ENCODE measurements at regions of chr19 and their contacts with region 1.

Region 1: GRCh38 chr19:5904352-5905113 is at the start of gene VMAC:
- H3K4me3 ChIP-seq: peak within 1 kb of the TSS; percentile 97
- H3K27ac ChIP-seq: peak within 1 kb of the TSS; percentile 88
- H3K4me1 ChIP-seq: no peaks in the 10 kb centered on the region
- CTCF ChIP-seq: no peak

Region 2: GRCh38 chr19:5690125-5690954 is 214.2 kb before region 1 on chr19 and contains the start of gene RPL36:
- CTCF ChIA-PET with region 1: interaction called, 3 read pairs
- POLR2A ChIA-PET with region 1: interaction called, 10 read pairs
- H3K4me3 ChIP-seq: peak within 1 kb of the TSS; percentile 97
- H3K27ac ChIP-seq: peak within 1 kb of the TSS; percentile 100
- H3K4me1 ChIP-seq: no peaks in the 10 kb centered on the region; the same call in 1 of the 2 replicates
- CTCF ChIP-seq: peak; percentile 100

Region 3: DNA sequence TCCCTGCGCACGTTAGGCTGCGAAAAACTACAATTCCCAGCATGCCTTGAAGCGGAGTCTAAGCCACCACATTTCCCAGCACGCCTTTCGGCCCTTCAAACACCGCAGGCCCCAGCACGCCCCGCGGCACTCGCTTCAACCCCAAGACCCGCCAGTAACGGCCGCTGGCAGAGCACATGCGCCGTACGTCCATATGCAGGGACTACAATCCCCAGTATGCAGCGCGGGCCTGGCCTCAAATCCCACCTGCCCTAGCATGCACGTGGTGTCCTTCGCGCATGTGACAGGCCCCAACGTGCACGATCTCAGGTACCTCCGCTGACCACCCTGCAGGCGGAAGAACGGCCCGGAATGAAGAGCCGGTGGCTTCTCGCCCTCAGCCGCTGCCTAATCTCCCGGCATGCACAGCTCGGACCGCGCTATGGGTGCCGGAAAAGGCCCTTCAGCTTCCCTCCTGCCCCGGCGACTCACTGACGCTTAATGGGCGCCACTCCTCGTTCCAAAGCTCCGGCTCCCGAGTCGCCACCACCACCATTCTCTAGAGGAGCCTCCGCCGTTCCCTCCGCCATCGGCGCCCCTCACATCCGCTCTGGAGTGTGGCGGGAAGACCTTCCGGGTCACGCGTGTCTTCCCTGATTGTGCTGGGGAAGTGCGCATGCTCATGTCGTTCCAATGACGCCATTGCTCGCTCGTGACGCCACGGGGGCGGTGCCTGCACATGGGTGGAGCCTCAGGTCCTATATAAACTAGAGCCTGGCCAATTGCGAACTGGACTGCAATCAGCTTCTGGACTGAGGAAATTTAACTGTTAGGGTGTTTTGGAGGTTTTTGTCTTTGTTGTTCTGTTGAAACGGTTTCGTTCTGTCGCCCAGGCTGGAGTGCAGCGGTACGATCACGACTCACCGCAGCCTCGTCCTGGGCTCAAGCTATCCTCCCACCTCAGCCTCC is 113.7 kb before region 1 on chr19 and contains the start of gene DUS3L:
- CTCF ChIA-PET with region 1: interaction called, 4 read pairs
- POLR2A ChIA-PET with region 1: interaction called, 10 read pairs
- H3K4me3 ChIP-seq: peak within 1 kb of the TSS; percentile 71
- H3K27ac ChIP-seq: peak within 1 kb of the TSS; percentile 82
- H3K4me1 ChIP-seq: no peaks in the 10 kb centered on the region
- CTCF ChIP-seq: peak; percentile 23

Region 4: DNA sequence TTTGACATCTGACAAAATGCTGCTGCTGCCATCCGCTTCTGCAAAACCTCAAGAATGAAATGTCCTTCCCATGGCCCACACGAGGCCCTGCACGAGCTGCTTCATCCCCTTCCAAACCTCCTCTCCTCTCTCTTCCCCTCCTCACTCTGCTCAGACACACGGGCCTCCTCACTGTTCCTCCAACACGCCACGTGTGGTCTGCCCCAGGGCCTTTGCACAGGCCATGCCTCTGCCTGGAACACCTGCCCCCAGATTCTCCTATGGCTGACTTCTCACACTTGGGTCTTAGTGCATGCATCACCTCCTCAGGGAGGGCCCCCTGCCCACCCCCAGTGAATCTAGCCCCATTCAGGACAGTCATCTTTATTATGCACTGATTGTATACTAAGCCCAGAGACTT is 83.7 kb before region 1 on chr19:
- CTCF ChIA-PET with region 1: interaction called, 3 read pairs
- POLR2A ChIA-PET with region 1: interaction called, 18 read pairs
- H3K4me3 ChIP-seq: no peak overlapping the region
- H3K27ac ChIP-seq: no peak overlapping the region
- H3K4me1 ChIP-seq: no peaks in the 10 kb centered on the region
- CTCF ChIP-seq: no peak

Region 5: DNA sequence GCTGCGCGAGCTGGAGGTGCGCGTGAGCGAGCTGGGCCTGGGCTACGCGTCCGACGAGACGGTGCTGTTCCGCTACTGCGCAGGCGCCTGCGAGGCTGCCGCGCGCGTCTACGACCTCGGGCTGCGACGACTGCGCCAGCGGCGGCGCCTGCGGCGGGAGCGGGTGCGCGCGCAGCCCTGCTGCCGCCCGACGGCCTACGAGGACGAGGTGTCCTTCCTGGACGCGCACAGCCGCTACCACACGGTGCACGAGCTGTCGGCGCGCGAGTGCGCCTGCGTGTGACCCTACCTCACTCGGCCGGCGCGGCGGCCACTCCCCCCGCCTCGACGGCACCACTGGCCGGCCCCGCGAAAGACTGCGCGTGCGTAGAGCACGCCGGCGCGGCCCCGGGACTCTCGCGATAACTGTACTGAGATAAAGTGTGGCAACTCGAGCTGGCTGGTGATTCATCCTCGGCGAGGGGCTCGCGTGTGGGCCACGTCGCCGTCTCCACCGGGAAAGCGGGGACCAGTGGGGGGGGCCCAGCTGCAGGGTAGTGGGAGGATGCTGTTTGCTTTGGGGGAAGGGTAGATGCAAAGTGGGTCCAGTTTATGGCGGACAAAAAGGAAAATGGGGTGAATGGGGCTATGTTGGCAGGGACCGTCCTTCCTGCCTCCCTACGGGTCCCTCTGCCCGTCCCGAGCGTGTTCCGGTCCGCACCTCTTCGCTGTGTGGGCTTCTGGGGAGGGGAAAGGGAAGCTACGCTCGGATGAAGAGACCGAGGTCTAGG is 76.5 kb before region 1 on chr19:
- CTCF ChIA-PET with region 1: no interaction called
- POLR2A ChIA-PET with region 1: interaction called, 35 read pairs
- H3K4me3 ChIP-seq: peak overlapping the region; percentile 34
- H3K27ac ChIP-seq: peak overlapping the region; percentile 59; the same call in 1 of the 2 replicates
- H3K4me1 ChIP-seq: peaks cover 6% of the 10 kb centered on the region
- CTCF ChIP-seq: no peak

Region 6: GRCh38 chr19:5864725-5865486 is 39.6 kb before region 1 on chr19:
- CTCF ChIA-PET with region 1: no interaction called
- POLR2A ChIA-PET with region 1: no interaction called
- H3K4me3 ChIP-seq: no peak overlapping the region
- H3K27ac ChIP-seq: no peak overlapping the region
- H3K4me1 ChIP-seq: no peaks in the 10 kb centered on the region
- CTCF ChIP-seq: no peak

Region 7: GRCh38 chr19:5891938-5892771 is 12.4 kb before region 1 on chr19:
- CTCF ChIA-PET with region 1: interaction called, 11 read pairs
- POLR2A ChIA-PET with region 1: interaction called, 25 read pairs
- H3K4me3 ChIP-seq: no peak overlapping the region
- H3K27ac ChIP-seq: no peak overlapping the region
- H3K4me1 ChIP-seq: no peaks in the 10 kb centered on the region; the same call in 1 of the 2 replicates
- CTCF ChIP-seq: peak; percentile 91

Region 8: DNA sequence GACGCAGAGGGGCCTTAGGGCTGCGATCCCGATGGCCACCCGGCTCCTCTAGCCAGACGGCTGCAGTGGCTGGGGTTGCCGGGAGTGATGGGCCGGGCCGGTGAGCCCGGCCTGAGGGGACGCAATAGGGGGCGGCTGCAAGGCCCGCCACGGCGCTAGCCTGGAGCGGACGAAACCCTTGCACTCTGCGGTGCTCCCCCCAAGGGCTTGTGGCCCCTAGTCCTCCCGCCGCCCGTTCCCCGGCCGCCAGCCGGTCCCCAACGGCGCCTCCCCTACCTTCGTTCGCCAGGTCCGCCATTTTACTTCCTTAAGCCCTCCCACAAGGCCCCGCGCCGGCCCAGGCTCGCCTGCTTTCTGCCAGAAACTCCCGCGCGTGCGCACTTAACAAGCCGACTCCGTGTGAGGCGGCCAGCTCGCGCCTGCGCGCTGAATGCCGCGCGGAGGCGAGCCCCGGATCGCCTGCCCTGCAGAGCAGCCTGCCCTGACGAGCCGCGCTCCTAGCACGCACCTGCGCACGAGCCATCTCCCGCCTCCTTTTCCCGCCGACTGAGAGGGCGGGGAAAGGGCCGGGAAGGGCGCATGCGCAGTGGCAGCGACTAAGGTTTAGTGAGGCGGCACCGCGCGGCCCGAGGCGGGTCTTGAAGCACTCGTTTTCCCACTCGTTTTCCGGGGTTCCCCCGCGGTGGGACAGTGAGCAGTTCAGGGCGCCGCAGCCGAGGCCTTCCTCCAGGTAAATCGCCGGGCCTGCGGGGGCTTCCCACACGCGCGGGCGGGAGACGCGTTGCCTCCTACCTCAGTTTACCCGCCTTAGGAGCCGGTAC is 73.5 kb after region 1 on chr19 and contains the start of gene RANBP3:
- CTCF ChIA-PET with region 1: no interaction called
- POLR2A ChIA-PET with region 1: interaction called, 12 read pairs
- H3K4me3 ChIP-seq: peak within 1 kb of the TSS; percentile 98
- H3K27ac ChIP-seq: peak within 1 kb of the TSS; percentile 91
- H3K4me1 ChIP-seq: peaks cover 11% of the 10 kb centered on the region
- CTCF ChIP-seq: no peak; the same call in 1 of the 2 replicates

Region 9: GRCh38 chr19:5993648-5994358 is 89.3 kb after region 1 on chr19:
- CTCF ChIA-PET with region 1: no interaction called
- POLR2A ChIA-PET with region 1: no interaction called
- H3K4me3 ChIP-seq: no peak overlapping the region
- H3K27ac ChIP-seq: no peak overlapping the region
- H3K4me1 ChIP-seq: no peaks in the 10 kb centered on the region
- CTCF ChIP-seq: no peak

Region 10: GRCh38 chr19:6076675-6077463 is 172.3 kb after region 1 on chr19:
- CTCF ChIA-PET with region 1: no interaction called
- POLR2A ChIA-PET with region 1: no interaction called
- H3K4me3 ChIP-seq: no peak overlapping the region
- H3K27ac ChIP-seq: no peak overlapping the region
- H3K4me1 ChIP-seq: no peaks in the 10 kb centered on the region
- CTCF ChIP-seq: no peak